Right cardiac atrium (tissue), 5 donors: ENCODE measurements at regions of chr20 and their contacts with region 1.

Region 1: GRCh38 chr20:13119583-13119982 is 101.5 kb upstream of the ISM1 start:
- DNase-seq: no peak
- ATAC-seq: peak; percentile 71 to 80
- H3K4me3 ChIP-seq: no peak overlapping the region
- H3K27ac ChIP-seq: no peak overlapping the region
- H3K4me1 ChIP-seq: no peaks in the 10 kb centered on the region
- H3K27me3 ChIP-seq: no peaks in the 10 kb centered on the region

Region 2: GRCh38 chr20:12970372-12970821 is 149.2 kb before region 1 on chr20:
- intact Hi-C with region 1: no loop called
- DNase-seq: no peak
- ATAC-seq: peak; percentile 34 to 45
- H3K4me3 ChIP-seq: no peak overlapping the region
- H3K27ac ChIP-seq: no peak overlapping the region
- H3K4me1 ChIP-seq: no peaks in the 10 kb centered on the region
- H3K27me3 ChIP-seq: no peaks in the 10 kb centered on the region

Region 3: DNA sequence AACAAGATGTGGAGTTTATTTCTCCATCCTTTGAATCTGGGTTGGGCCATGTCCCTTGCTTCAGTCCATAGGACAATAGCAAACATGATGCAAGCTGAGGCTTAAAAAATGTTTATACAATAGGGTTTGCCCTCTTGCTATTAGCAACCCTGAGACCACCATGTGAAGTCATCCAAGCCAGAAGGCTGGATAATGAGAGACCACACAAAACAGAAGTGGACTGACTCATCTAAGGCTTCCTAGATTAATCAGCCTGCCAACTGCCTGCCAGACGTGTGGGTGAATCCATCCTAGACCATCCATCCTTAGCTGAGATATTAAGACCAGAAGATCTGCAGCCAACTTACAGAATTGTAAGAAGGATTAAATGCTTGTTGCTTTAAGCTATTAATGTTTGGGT is 63.4 kb after region 1 on chr20:
- intact Hi-C with region 1: no loop called
- DNase-seq: no peak
- ATAC-seq: no peak
- H3K4me3 ChIP-seq: no peak overlapping the region
- H3K27ac ChIP-seq: no peak overlapping the region
- H3K4me1 ChIP-seq: no peaks in the 10 kb centered on the region
- H3K27me3 ChIP-seq: no peaks in the 10 kb centered on the region

Region 4: GRCh38 chr20:13261460-13262301 is 142.1 kb after region 1 on chr20:
- intact Hi-C with region 1: loop called in 1 of 4 experiments (anchors 5 kb)
- DNase-seq: peak; percentile 55 to 74 (median 72)
- ATAC-seq: peak; percentile 73 to 75
- H3K4me3 ChIP-seq: no peak overlapping the region
- H3K27ac ChIP-seq: no peak overlapping the region
- H3K4me1 ChIP-seq: no peaks in the 10 kb centered on the region
- H3K27me3 ChIP-seq: no peaks in the 10 kb centered on the region

Region 5: DNA sequence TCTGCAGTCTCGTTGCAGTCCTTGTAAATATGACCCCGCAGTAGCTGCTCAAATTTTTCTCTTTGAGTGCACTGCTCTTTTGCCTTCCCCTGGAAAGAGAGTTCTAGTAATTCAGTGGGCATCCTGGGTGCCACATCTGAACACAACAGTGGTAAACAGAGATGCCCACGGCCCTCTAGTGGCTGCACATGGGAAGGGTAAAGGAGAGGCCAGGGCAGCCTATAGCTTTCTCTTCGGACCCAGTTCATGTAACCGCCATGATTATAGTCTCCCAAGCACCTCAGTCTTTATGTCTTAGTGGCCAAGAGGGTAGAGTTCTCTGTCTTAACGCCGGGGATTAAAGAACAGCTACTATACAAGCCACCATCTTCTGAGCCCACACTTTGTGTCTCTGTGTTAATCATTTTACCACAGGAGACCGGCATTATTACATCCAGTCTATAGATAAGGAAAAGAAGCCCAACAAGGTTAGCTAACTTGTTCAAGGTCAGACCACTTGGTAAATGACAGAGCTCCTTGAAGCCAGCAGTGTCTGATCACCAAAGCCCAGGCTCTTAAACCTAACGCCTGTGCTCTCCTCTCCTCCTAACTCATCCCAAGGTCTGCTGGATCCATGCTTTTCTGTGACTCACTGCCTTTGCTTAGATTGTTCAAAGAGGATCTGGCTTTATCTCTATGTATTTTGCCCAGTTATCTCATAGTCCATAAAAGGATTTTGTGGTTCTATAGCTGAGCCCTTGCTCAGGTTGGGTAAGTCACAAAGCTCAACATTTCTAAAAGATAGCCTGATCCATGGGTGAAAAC is 183.3 kb after region 1 on chr20:
- intact Hi-C with region 1: loop called in 3 of 4 experiments (anchors 2 to 10 kb)
- DNase-seq: peak in 1 of 3 donors; percentile 39
- ATAC-seq: peak; percentile 53 to 61
- H3K4me3 ChIP-seq: no peak overlapping the region
- H3K27ac ChIP-seq: no peak overlapping the region
- H3K4me1 ChIP-seq: no peaks in the 10 kb centered on the region
- H3K27me3 ChIP-seq: no peaks in the 10 kb centered on the region

Region 6: DNA sequence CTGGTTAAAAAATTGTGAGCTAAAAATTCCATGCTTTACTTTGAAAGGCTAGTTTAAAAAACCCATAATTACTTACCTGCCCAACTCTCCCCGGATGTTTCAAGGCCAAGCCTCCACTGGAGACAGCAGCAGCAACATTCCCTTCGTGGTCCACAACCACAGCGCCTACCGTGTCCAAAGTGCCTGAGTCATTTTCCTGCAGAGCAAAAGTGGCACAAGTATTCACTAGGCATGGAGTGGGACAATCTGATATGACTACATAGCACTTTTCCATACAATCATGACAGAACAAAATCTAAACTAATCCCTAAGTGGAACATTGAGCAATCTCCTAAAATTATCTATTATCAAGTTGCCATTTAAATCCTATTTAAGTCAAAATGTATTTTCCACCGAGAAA is 414.4 kb after region 1 on chr20:
- intact Hi-C with region 1: loop called in 1 of 4 experiments (anchors 10 kb)
- DNase-seq: no peak
- ATAC-seq: no peak
- H3K4me3 ChIP-seq: no peak overlapping the region
- H3K27ac ChIP-seq: no peak overlapping the region
- H3K4me1 ChIP-seq: no peaks in the 10 kb centered on the region
- H3K27me3 ChIP-seq: no peaks in the 10 kb centered on the region

Region 7: GRCh38 chr20:13546497-13547131 is 427.0 kb after region 1 on chr20:
- intact Hi-C with region 1: loop called in 1 of 4 experiments (anchors 10 kb)
- DNase-seq: peak; percentile 75 to 92 (median 80)
- ATAC-seq: no peak
- H3K4me3 ChIP-seq: no peak overlapping the region
- H3K27ac ChIP-seq: no peak overlapping the region
- H3K4me1 ChIP-seq: no peaks in the 10 kb centered on the region
- H3K27me3 ChIP-seq: no peaks in the 10 kb centered on the region